Sigmoid colon (tissue), 7 donors: ENCODE measurements at regions of chr1 and their contacts with region 1.

Region 1: GRCh38 chr1:222928212-222928611 is 113.4 kb downstream of the DISP1 start:
- DNase-seq: peak; percentile 75
- H3K4me3 ChIP-seq: peak overlapping the region; percentile 15 to 43 (median 38)
- H3K27ac ChIP-seq: peak overlapping the region; percentile 54 to 68 (median 60)
- H3K4me1 ChIP-seq: peaks cover 0 to 83% (median 44%) of the 10 kb centered on the region in 4 donors
- H3K27me3 ChIP-seq: no peaks in the 10 kb centered on the region
- CTCF ChIP-seq: no peak
- EP300 ChIP-seq: no peak
- POLR2A ChIP-seq: no peak

Region 2: DNA sequence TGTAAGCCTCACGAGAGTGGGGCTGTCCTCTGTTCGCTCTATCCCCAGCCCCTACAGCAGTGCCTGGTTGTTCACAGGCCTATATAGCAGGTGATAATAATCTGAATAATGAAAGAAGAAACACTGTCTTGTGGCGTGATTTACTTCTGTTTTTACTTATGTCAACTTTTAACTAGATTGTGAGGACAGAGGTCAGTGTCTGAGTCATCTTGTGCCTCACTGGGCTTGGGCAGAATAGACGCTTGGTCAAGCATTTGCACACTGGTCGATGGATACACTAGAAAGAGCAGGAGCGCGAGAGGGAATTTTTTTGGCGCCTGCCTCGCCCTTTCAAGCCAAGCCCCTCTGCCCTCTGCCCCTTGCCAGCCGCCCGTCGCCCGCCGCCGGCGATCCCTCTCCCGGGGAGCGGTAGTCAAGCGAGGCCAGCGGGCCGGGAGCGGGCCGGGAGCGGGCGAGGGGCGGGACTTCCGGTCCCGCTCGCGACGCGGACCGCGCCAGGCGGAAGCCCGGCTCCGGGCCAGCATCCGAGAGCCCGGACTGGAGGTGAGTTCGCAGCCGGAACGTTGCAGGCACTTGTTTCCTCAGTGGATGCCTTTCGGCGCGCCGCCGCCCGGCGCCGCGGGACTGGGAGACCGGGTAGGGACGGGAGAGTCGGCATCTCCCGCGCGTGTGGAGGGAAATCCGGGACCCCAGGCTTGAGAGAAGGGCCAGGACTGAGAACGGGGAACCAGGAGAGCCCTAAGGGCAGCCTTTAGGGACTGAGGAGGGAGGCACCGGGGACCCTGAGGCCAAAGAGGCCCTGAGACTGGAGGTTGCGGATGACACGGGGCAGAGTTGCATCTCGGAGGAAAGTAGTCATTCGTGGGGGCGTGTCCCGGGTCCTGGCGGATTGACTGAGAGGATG is 113.4 kb before region 1 on chr1 and contains the start of gene DISP1:
- intact Hi-C with region 1: loop called (anchors 5 kb)
- DNase-seq: peak; percentile 95
- H3K4me3 ChIP-seq: peak within 1 kb of the TSS; percentile 72 to 92 (median 90)
- H3K27ac ChIP-seq: peak within 1 kb of the TSS; percentile 89 to 99 (median 98)
- H3K4me1 ChIP-seq: peaks cover 4 to 51% (median 34%) of the 10 kb centered on the region in 4 donors
- H3K27me3 ChIP-seq: no peaks in the 10 kb centered on the region
- CTCF ChIP-seq: peak in 1 of 4 experiments; percentile 23
- EP300 ChIP-seq: peak in 1 of 4 donors; percentile 16
- POLR2A ChIP-seq: peak; percentile 65 to 84
- total RNA-seq, gene DISP1: 17.1 to 31.3 (median 23.5) TPM

Region 3: DNA sequence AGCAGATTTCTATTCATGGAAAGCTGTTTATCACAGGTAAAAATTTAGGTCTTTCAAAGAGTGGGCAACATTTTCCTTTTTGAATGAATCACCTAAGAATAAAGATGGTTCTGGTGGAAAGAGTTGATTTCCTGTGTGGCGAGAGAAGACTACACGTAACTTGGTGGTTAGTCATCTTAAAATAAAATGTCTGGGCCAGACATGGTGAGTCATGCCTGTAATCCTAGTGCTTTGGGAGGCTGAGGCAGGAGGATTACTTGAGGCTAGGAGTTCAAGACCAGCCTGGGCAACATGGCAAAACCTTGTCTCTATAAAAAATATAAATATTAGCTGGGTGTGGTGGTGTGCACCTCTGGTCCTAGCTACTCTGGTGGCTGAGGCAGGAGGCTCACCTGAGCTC is 47.6 kb before region 1 on chr1:
- intact Hi-C with region 1: no loop called
- DNase-seq: no peak
- H3K4me3 ChIP-seq: no peak overlapping the region
- H3K27ac ChIP-seq: no peak overlapping the region
- H3K4me1 ChIP-seq: peaks cover 0 to 30% (median 4%) of the 10 kb centered on the region in 4 donors
- H3K27me3 ChIP-seq: no peaks in the 10 kb centered on the region
- CTCF ChIP-seq: no peak
- EP300 ChIP-seq: no peak
- POLR2A ChIP-seq: no peak